ENCODE measurements at regions of chr1 and their contacts with region 1.

Region 1: GRCh38 chr1:78676347-78676982 is 26.8 kb downstream of the IFI44 start:
- DNase-seq: peak in 3 of 10 donors; percentile 9 to 62 (median 20)
- H3K4me3 ChIP-seq: peak overlapping the region in 4 of 59 donors; percentile 5 to 42 (median 26)
- H3K27ac ChIP-seq: no peak overlapping the region
- H3K27me3 ChIP-seq: no peaks in the 10 kb centered on the region
- CTCF ChIP-seq: peak; percentile 75 to 98 (median 92)

Region 2: GRCh38 chr1:78577257-78578100 is 99.0 kb before region 1 on chr1:
- intact Hi-C with region 1: no loop called
- DNase-seq: no peak
- H3K4me3 ChIP-seq: no peak overlapping the region
- H3K27ac ChIP-seq: no peak overlapping the region
- H3K27me3 ChIP-seq: no peaks in the 10 kb centered on the region
- CTCF ChIP-seq: no peak

Region 3: GRCh38 chr1:78617615-78618026 is 58.8 kb before region 1 on chr1:
- intact Hi-C with region 1: loop called (anchors 2 to 5 kb)
- DNase-seq: peak in 9 of 10 donors; percentile 11 to 72 (median 59)
- H3K4me3 ChIP-seq: peak overlapping the region in 30 of 59 donors; percentile 1 to 56 (median 20)
- H3K27ac ChIP-seq: peak overlapping the region in 6 of 59 donors; percentile 6 to 80 (median 27)
- H3K27me3 ChIP-seq: no peaks in the 10 kb centered on the region
- CTCF ChIP-seq: peak; percentile 78 to 98 (median 90)

Region 4: GRCh38 chr1:78760858-78761257 is 84.4 kb after region 1 on chr1:
- intact Hi-C with region 1: no loop called
- DNase-seq: no peak
- H3K4me3 ChIP-seq: no peak overlapping the region
- H3K27ac ChIP-seq: no peak overlapping the region
- H3K27me3 ChIP-seq: no peaks in the 10 kb centered on the region
- CTCF ChIP-seq: no peak

Measured in dorsolateral prefrontal cortex (tissue), 120 donors.